ENCODE measurements at regions of chr1 and their contacts with region 1.

Region 1: DNA sequence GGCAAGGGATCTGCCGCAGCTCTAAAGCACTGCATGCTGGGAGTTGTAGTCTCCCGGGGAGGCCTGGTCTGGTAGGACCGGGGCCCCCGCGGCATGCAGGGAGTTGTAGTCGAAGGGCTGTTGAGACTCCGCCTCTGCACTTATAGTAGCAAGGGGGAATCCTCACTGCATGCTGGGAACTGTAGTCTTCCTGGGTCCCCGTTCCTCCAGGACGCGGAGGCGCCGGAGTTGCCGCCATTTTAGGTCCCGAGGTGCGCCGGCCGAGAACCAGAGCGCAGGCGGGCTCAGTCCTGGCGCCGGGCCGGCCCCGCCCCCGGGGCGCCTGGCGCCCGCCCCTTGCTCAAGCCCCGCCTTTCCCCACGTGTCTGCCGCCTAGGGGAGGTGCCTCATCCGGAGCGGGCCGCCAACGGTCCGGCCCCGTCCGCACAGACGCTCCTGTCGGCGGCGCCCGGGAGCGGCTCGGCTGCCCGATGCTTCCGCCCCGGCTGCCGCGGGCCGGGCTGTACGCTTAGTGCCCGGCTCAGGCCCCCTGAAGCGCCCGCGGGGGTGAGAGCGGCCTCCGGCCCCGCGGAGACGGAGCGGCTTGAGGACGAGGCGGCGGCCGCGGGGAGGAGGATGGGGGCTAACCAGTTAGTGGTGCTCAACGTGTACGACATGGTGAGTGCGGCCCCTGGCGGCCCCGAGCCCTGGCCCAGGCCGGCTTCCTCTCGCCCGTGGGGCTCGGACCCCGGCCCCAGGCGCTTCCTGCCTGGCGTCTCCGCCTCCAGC is at the start of gene DESI2:
- DNase-seq: peak; percentile 95 to 100 (median 98)
- ATAC-seq: peak; percentile 95
- H3K4me3 ChIP-seq: peak within 1 kb of the TSS; percentile 75
- H3K4me3 Mint-ChIP-seq: peak within 1 kb of the TSS in 9 of 10 donors; percentile 83 to 91 (median 88)
- H3K27ac ChIP-seq: peak within 1 kb of the TSS; percentile 87
- H3K27ac Mint-ChIP-seq: peak within 1 kb of the TSS; percentile 81 to 96 (median 90)
- H3K4me1 ChIP-seq: peaks cover 19 to 24% of the 10 kb centered on the region in 2 donors
- H3K4me1 Mint-ChIP-seq: peaks cover 19 to 33% (median 21%) of the 10 kb centered on the region in 7 donors
- H3K27me3 ChIP-seq: no peaks in the 10 kb centered on the region
- H3K27me3 Mint-ChIP-seq: no peaks in the 10 kb centered on the region
- total RNA-seq, gene DESI2: 13.0 to 23.4 (median 17.6) TPM

Region 2: DNA sequence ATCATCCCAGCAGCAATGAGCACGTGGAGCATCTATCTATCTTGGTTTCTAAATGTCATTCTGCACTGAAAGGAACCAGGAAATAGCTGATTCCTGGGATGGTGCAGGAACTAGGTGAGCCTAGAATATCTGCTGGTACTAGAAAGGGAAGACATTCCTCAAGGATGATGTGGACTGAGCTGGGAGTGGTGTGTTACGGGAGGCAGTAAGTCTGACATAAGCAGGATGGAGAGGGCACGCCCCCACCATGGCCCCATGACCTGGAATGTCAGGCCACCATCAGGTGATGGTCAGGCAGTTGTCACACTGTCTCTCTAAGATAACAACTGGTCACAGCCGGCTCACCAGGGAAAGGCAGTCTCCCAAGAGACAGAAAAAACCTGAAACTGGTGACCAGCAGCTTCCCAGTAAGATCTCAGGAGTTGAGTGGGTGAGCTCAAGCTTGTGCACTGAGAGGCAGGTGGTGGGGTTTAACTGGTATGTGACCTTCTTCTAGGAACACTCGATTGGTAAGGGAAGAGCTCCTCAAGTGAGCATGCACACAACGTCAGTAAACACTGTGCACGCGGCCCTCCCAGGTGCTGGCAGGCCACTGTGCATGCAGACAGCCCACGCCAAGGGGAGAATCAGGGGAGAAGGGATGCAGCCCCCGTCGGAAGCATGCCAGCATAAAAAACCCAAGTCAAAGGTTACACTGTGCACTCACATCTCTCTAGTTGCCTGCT is 349.8 kb before region 1 on chr1:
- CTCF ChIA-PET with region 1: no interaction called
- POLR2A ChIA-PET with region 1: no interaction called
- intact Hi-C with region 1: loop called in 1 of 2 experiments (anchors 1 kb)
- DNase-seq: no peak
- ATAC-seq: no peak
- H3K4me3 ChIP-seq: no peak overlapping the region
- H3K4me3 Mint-ChIP-seq: no peak overlapping the region
- H3K27ac ChIP-seq: no peak overlapping the region
- H3K27ac Mint-ChIP-seq: peak overlapping the region in 3 of 9 donors; percentile 4 to 43 (median 7)
- H3K4me1 ChIP-seq: peaks cover 0 to 3% of the 10 kb centered on the region in 2 donors
- H3K4me1 Mint-ChIP-seq: peaks cover 5 to 13% (median 7%) of the 10 kb centered on the region in 7 donors
- H3K27me3 ChIP-seq: no peaks in the 10 kb centered on the region
- H3K27me3 Mint-ChIP-seq: peaks cover 0 to 2% (median 0%) of the 10 kb centered on the region in 5 donors

Region 3: GRCh38 chr1:244461245-244462071 is 191.4 kb before region 1 on chr1 and contains the start of gene CATSPERE:
- CTCF ChIA-PET with region 1: no interaction called
- POLR2A ChIA-PET with region 1: interaction called, 5 read pairs
- intact Hi-C with region 1: loop called in 1 of 2 experiments (anchors 1 kb)
- DNase-seq: peak; percentile 55 to 79 (median 76)
- ATAC-seq: peak; percentile 99
- H3K4me3 ChIP-seq: peak within 1 kb of the TSS; percentile 77
- H3K4me3 Mint-ChIP-seq: peak within 1 kb of the TSS; percentile 69 to 89 (median 82)
- H3K27ac ChIP-seq: peak within 1 kb of the TSS; percentile 78
- H3K27ac Mint-ChIP-seq: peak within 1 kb of the TSS; percentile 78 to 97 (median 90)
- H3K4me1 ChIP-seq: peaks cover 5 to 6% of the 10 kb centered on the region in 2 donors
- H3K4me1 Mint-ChIP-seq: peaks cover 6 to 16% (median 13%) of the 10 kb centered on the region in 7 donors
- H3K27me3 ChIP-seq: no peaks in the 10 kb centered on the region
- H3K27me3 Mint-ChIP-seq: peaks cover 0 to 2% (median 0%) of the 10 kb centered on the region in 5 donors
- total RNA-seq, gene CATSPERE: 0.77 to 2.2 (median 1.7) TPM

Region 4: GRCh38 chr1:244801246-244801645 is 148.4 kb after region 1 on chr1:
- CTCF ChIA-PET with region 1: interaction called, 3 read pairs
- POLR2A ChIA-PET with region 1: no interaction called
- intact Hi-C with region 1: loop called (anchors 1 to 2 kb)
- DNase-seq: peak; percentile 14 to 63 (median 45)
- ATAC-seq: peak; percentile 86
- H3K4me3 ChIP-seq: no peak overlapping the region
- H3K4me3 Mint-ChIP-seq: peak overlapping the region in 4 of 10 donors; percentile 32 to 47 (median 40)
- H3K27ac ChIP-seq: no peak overlapping the region
- H3K27ac Mint-ChIP-seq: peak overlapping the region in 2 of 9 donors; percentile 36 to 77
- H3K4me1 ChIP-seq: no peaks in the 10 kb centered on the region
- H3K4me1 Mint-ChIP-seq: peaks cover 0 to 5% (median 3%) of the 10 kb centered on the region in 7 donors
- H3K27me3 ChIP-seq: no peaks in the 10 kb centered on the region
- H3K27me3 Mint-ChIP-seq: peaks cover 0 to 4% (median 0%) of the 10 kb centered on the region in 5 donors

Region 5: DNA sequence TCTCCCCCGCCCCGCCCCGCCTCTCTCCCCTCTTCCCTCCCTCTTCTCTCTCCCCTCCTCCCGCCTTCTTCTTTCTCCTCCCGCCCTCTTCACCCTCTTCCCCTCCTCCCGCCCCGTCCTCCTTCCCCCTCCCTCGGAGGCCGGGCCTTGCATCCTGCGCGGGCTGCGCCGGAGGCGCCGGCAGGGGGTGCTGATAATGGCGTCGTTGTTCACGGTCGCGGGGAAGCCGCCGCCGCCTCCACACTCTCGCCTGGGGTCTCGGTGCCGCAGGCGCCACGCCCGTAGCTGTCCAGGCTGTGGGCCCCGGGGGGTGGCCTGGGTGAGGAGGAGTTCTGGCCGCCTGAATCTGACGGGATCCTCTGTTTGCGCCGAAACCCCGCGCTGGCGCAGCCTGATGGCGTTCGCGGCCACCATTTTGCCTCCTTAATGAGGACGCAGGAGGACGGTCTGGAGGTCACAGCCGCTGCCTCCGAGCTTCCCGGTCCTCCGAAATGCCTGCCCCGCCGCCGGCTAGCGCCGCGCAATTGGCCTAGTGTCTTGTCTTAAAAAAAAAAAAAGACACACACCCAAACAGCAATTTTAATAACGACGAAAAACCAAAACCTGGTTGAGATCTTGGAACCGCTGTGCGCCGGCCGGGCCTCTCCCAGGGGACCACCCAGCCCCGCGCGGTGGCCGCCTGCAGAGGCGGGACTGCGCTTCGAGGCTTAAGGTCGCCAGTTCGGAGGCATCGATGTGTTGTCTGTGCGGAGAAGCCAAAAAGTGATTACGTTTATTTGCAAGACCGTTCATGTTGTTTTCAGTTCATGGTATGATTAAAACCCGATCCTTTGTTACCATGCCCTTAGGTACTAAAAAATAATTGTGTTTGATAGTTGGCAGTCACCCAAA is 318.0 kb after region 1 on chr1:
- CTCF ChIA-PET with region 1: no interaction called
- POLR2A ChIA-PET with region 1: interaction called, 13 read pairs
- intact Hi-C with region 1: loop called (anchors 1 kb)
- DNase-seq: peak; percentile 91 to 97 (median 95)
- ATAC-seq: peak; percentile 88
- H3K4me3 ChIP-seq: peak overlapping the region; percentile 81
- H3K4me3 Mint-ChIP-seq: peak overlapping the region; percentile 91 to 95 (median 93)
- H3K27ac ChIP-seq: peak overlapping the region; percentile 99
- H3K27ac Mint-ChIP-seq: peak overlapping the region; percentile 97 to 100 (median 99)
- H3K4me1 ChIP-seq: peaks cover 5 to 12% of the 10 kb centered on the region in 2 donors
- H3K4me1 Mint-ChIP-seq: peaks cover 7 to 31% (median 25%) of the 10 kb centered on the region in 7 donors
- H3K27me3 ChIP-seq: no peaks in the 10 kb centered on the region
- H3K27me3 Mint-ChIP-seq: peaks cover 0 to 14% (median 0%) of the 10 kb centered on the region in 5 donors

Region 6: GRCh38 chr1:245953876-245954660 is 1301.2 kb after region 1 on chr1:
- CTCF ChIA-PET with region 1: no interaction called
- POLR2A ChIA-PET with region 1: no interaction called
- intact Hi-C with region 1: loop called (anchors 5 to 10 kb)
- DNase-seq: peak in 6 of 9 donors; percentile 17 to 49 (median 34)
- ATAC-seq: peak; percentile 45
- H3K4me3 ChIP-seq: peak overlapping the region; percentile 31
- H3K4me3 Mint-ChIP-seq: peak overlapping the region in 8 of 10 donors; percentile 56 to 90 (median 78)
- H3K27ac ChIP-seq: peak overlapping the region; percentile 76
- H3K27ac Mint-ChIP-seq: peak overlapping the region in 1 of 9 donors; percentile 97
- H3K4me1 ChIP-seq: peaks cover 25 to 27% of the 10 kb centered on the region in 2 donors
- H3K4me1 Mint-ChIP-seq: peaks cover 9 to 29% (median 19%) of the 10 kb centered on the region in 7 donors
- H3K27me3 ChIP-seq: no peaks in the 10 kb centered on the region
- H3K27me3 Mint-ChIP-seq: no peaks in the 10 kb centered on the region

Measured in naive thymus-derived CD4-positive, alpha-beta T cell (primary cell).